ENCODE measurements at regions of chr20 and their contacts with region 1.

Region 1: DNA sequence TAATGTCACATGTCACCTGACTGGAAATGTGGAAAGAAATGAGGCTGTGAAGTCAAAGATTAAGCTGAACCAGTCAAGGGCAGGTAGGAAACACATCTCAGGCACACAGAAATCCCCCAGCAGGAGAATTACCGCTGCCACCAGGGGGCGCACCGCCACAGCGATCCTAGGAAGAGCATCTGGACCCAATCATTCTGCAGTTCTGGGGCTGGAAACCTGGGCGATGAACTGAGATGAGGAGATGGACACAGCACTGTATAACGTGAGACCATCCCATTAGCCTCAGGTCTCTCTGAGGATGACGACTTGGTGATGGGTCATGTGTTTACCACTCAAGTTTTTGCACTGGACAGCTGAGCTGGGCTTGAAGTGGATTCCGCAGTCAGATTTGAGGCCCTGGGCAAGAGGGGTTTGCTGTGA is 6.5 kb upstream of the SLC24A3 start:
- DNase-seq: no peak
- H3K4me3 ChIP-seq: no peak overlapping the region
- CTCF ChIP-seq: peak; percentile 89

Region 2: GRCh38 chr20:18632196-18633009 is 573.6 kb before region 1 on chr20:
- CTCF ChIA-PET with region 1: interaction called, 11 read pairs
- POLR2A ChIA-PET with region 1: no interaction called
- DNase-seq: no peak
- H3K4me3 ChIP-seq: no peak overlapping the region
- CTCF ChIP-seq: peak; percentile 96

Region 3: GRCh38 chr20:19193349-19193748 is 12.6 kb before region 1 on chr20:
- CTCF ChIA-PET with region 1: interaction called, 24 read pairs
- POLR2A ChIA-PET with region 1: no interaction called
- DNase-seq: no peak
- H3K4me3 ChIP-seq: no peak overlapping the region
- CTCF ChIP-seq: no peak

Region 4: DNA sequence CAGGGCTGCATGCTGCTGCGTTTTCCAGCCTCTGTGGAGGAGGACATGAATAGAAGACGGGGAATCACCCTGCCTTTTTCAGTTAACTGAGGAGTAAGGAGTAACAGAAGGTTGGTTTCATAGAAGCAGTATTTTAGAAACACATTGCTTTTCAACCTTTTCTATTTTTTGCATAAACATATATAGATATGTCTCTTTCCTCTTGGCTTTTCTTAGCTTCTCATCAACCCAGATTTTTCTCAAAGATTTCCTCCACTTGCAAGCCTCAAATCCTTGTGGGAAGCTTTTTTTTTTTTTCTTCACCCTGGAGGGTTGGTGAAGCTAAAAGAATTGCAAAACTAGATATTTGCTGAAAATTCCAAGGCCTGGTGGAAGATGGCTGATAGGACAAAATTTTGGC is 12.4 kb after region 1 on chr20:
- CTCF ChIA-PET with region 1: interaction called, 31 read pairs
- POLR2A ChIA-PET with region 1: no interaction called
- DNase-seq: no peak
- H3K4me3 ChIP-seq: no peak overlapping the region
- CTCF ChIP-seq: no peak

Region 5: GRCh38 chr20:19308146-19308545 is 102.2 kb after region 1 on chr20:
- CTCF ChIA-PET with region 1: no interaction called
- POLR2A ChIA-PET with region 1: no interaction called
- DNase-seq: no peak
- H3K4me3 ChIP-seq: no peak overlapping the region
- CTCF ChIP-seq: no peak

Region 6: GRCh38 chr20:19583532-19584175 is 377.7 kb after region 1 on chr20:
- CTCF ChIA-PET with region 1: interaction called, 114 read pairs
- POLR2A ChIA-PET with region 1: no interaction called
- DNase-seq: no peak
- H3K4me3 ChIP-seq: no peak overlapping the region
- CTCF ChIP-seq: peak; percentile 81